ENCODE measurements at regions of chr16 and their contacts with region 1.

Region 1: GRCh38 chr16:3825946-3826345 is 54.6 kb downstream of the CREBBP start:
- DNase-seq: no peak
- H3K4me3 ChIP-seq: no peak overlapping the region
- H3K4me3 Mint-ChIP-seq: peak overlapping the region in 5 of 8 donors; percentile 5 to 79 (median 27)
- H3K27ac ChIP-seq: no peak overlapping the region
- H3K27ac Mint-ChIP-seq: peak overlapping the region in 1 of 7 donors; percentile 57
- H3K4me1 ChIP-seq: peaks cover 77% of the 10 kb centered on the region
- H3K4me1 Mint-ChIP-seq: peaks cover 65 to 96% (median 77%) of the 10 kb centered on the region in 4 donors
- H3K27me3 ChIP-seq: no peaks in the 10 kb centered on the region
- H3K27me3 Mint-ChIP-seq: no peaks in the 10 kb centered on the region

Region 2: DNA sequence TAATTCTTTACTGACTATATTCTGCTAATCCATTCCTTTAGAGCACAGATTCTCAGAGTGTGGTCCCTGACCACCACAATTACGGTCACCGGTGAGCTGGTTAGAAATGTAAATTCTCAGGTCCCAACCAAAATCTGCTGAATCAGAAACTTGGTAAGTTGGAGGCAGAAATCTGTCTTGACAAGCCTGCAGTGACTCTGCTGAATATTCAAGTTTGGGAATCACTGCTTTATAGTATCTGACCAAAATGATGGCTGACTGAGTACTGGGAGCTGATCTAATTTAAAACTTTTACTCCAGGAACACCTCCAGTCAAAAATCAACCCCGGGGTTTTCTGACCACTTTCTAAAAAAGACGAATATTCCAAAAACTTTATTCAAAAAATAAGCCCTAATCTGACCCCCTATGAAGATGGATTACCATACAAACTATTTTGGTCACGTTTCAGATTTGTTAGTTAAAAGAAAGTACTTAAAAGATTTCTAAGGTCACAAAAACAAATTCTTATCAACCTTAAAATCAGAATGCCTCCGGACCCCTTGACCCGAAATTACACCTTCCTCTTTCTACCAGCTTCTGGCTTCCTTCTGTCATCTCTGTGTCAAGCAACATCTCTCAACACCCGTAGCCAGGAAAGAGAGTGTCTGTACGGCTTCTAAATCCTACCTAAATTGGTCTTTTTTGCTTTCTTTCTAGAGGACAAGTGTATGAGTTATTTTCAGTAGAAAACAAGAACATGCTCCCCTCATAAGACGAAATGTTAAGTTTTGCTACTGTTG is 16.0 kb after region 1 on chr16:
- CTCF ChIA-PET with region 1: no interaction called
- POLR2A ChIA-PET with region 1: no interaction called
- intact Hi-C with region 1: loop called (anchors 2 kb)
- DNase-seq: no peak
- H3K4me3 ChIP-seq: no peak overlapping the region
- H3K4me3 Mint-ChIP-seq: peak overlapping the region in 1 of 8 donors; percentile 13
- H3K27ac ChIP-seq: no peak overlapping the region
- H3K27ac Mint-ChIP-seq: peak overlapping the region in 3 of 7 donors; percentile 12 to 59 (median 19)
- H3K4me1 ChIP-seq: peaks cover 65% of the 10 kb centered on the region
- H3K4me1 Mint-ChIP-seq: peaks cover 39 to 61% (median 51%) of the 10 kb centered on the region in 4 donors
- H3K27me3 ChIP-seq: no peaks in the 10 kb centered on the region
- H3K27me3 Mint-ChIP-seq: no peaks in the 10 kb centered on the region

Measured in CD4-positive, alpha-beta memory T cell (primary cell).